CD8-positive, alpha-beta memory T cell (primary cell): ENCODE measurements at regions of chr1 and their contacts with region 1.

Region 1: GRCh38 chr1:45569962-45570581 is 13.8 kb upstream of the NASP start:
- DNase-seq: peak; percentile 47 to 80 (median 64)
- H3K4me3 ChIP-seq: no peak overlapping the region
- H3K4me3 Mint-ChIP-seq: no peak overlapping the region
- H3K27ac ChIP-seq: no peak overlapping the region
- H3K27ac Mint-ChIP-seq: peak overlapping the region in 6 of 8 donors; percentile 21 to 86 (median 48)
- H3K4me1 ChIP-seq: no peaks in the 10 kb centered on the region
- H3K4me1 Mint-ChIP-seq: no peaks in the 10 kb centered on the region
- H3K27me3 ChIP-seq: no peaks in the 10 kb centered on the region
- H3K27me3 Mint-ChIP-seq: no peaks in the 10 kb centered on the region

Region 2: DNA sequence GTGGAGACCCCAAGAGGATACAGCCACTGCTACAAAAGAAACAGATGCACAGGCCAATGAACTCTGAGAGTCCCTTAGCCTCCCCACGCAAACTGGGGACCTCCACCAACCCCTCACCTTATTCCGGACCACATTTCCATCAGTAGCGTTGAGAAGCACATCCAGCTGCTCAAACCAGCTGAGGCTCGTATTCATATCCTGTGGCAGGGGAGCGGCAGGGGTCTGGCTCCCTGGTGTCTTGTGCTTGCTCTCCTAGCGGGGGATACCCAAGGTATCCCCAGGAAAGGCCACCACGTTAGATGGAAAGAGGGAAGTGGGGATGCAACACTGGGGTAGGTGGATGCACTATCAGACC is 70.7 kb before region 1 on chr1:
- CTCF ChIA-PET with region 1: interaction called, 15 read pairs
- POLR2A ChIA-PET with region 1: no interaction called
- DNase-seq: no peak
- H3K4me3 ChIP-seq: peak overlapping the region; percentile 69
- H3K4me3 Mint-ChIP-seq: peak overlapping the region; percentile 93 to 97 (median 94)
- H3K27ac ChIP-seq: peak overlapping the region; percentile 59
- H3K27ac Mint-ChIP-seq: peak overlapping the region; percentile 71 to 97 (median 91)
- H3K4me1 ChIP-seq: peaks cover 15% of the 10 kb centered on the region
- H3K4me1 Mint-ChIP-seq: peaks cover 28 to 36% (median 35%) of the 10 kb centered on the region in 3 donors
- H3K27me3 ChIP-seq: no peaks in the 10 kb centered on the region
- H3K27me3 Mint-ChIP-seq: no peaks in the 10 kb centered on the region

Region 3: DNA sequence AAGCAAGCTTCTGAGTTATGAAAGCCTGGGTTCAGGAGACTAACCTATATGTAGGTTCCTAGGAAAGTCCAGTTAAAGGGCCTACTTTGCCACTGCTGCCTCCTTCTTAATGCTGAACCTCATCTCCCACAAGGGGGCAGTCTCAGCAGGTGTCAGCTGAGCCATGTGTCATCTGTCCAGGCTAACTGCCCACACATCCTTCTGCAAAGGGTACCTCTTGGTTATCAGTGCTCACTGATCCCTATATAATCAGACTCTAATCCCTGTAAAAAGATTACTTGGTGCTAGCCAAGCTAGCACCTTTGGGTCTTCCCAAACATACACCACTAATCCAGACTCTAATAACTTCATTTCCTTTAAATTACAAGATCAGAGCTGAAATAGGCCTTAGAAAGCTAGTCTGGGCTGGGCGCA is 57.4 kb before region 1 on chr1:
- CTCF ChIA-PET with region 1: interaction called, 101 read pairs
- POLR2A ChIA-PET with region 1: no interaction called
- DNase-seq: peak; percentile 24 to 65 (median 44)
- H3K4me3 ChIP-seq: no peak overlapping the region
- H3K4me3 Mint-ChIP-seq: no peak overlapping the region
- H3K27ac ChIP-seq: no peak overlapping the region
- H3K27ac Mint-ChIP-seq: peak overlapping the region in 3 of 8 donors; percentile 42 to 82 (median 51)
- H3K4me1 ChIP-seq: no peaks in the 10 kb centered on the region
- H3K4me1 Mint-ChIP-seq: peaks cover 0 to 12% (median 3%) of the 10 kb centered on the region in 3 donors
- H3K27me3 ChIP-seq: no peaks in the 10 kb centered on the region
- H3K27me3 Mint-ChIP-seq: no peaks in the 10 kb centered on the region

Region 4: DNA sequence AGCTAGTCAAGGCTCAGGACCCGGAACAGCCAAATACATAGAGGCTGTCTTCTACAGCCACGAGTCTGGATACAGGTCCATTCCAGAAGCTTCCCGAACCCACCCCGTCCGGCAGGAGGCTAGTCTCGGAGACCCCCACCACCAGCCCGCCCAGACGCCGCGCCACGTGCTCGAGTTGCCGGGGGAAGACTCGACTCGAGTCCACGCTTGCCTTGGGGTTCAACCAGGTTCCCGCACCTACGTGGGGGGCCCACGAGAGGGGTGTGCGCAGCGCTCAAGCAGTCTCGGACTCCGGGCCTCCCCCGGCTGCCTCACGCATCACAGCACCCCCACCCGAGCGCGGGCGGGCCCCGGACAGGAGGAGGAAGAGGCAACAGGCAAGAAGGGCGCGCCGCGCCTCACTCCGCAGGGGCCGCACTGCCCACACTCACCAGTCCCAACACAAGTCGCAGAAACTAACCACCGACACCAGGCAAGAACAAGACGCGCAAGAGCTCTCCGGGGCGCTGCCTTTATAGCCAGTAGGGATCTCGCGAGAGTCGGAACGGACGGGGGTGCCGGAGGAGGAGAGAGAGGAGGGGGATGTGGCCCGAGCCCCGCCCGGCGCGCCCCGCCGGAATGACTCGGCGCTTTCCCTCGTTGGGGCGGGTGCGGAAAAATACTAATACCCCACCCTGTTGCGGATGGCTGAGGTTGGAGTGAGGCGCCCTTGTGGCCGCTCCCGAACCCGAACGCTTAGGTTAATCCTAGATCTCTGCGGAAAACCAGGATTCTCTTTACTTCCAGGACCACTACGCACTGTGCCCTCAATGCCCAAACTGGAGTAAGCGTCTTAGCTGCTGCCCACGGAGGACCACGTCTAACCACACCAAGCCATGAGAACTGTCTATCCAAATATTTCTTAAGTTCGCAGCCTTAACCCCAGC is 48.4 kb before region 1 on chr1 and contains the start of gene PRDX1:
- CTCF ChIA-PET with region 1: interaction called, 12 read pairs
- POLR2A ChIA-PET with region 1: interaction called, 8 read pairs
- DNase-seq: peak; percentile 83 to 97 (median 92)
- H3K4me3 ChIP-seq: peak within 1 kb of the TSS; percentile 96
- H3K4me3 Mint-ChIP-seq: peak within 1 kb of the TSS; percentile 88 to 97 (median 94)
- H3K27ac ChIP-seq: peak within 1 kb of the TSS; percentile 82
- H3K27ac Mint-ChIP-seq: peak within 1 kb of the TSS; percentile 62 to 95 (median 90)
- H3K4me1 ChIP-seq: peaks cover 24% of the 10 kb centered on the region
- H3K4me1 Mint-ChIP-seq: peaks cover 24 to 37% (median 27%) of the 10 kb centered on the region in 3 donors
- H3K27me3 ChIP-seq: no peaks in the 10 kb centered on the region
- H3K27me3 Mint-ChIP-seq: peaks cover 0 to 3% of the 10 kb centered on the region in 2 donors
- total RNA-seq, gene PRDX1: 784 to 849 TPM

Region 5: GRCh38 chr1:45583264-45583665 is 13.2 kb after region 1 on chr1:
- CTCF ChIA-PET with region 1: interaction called, 48 read pairs
- POLR2A ChIA-PET with region 1: no interaction called
- DNase-seq: peak; percentile 93 to 96 (median 94)
- H3K4me3 ChIP-seq: peak overlapping the region; percentile 95
- H3K4me3 Mint-ChIP-seq: peak overlapping the region; percentile 93 to 100 (median 99)
- H3K27ac ChIP-seq: peak overlapping the region; percentile 95
- H3K27ac Mint-ChIP-seq: peak overlapping the region; percentile 96 to 99 (median 99)
- H3K4me1 ChIP-seq: peaks cover 21% of the 10 kb centered on the region
- H3K4me1 Mint-ChIP-seq: peaks cover 31 to 34% (median 34%) of the 10 kb centered on the region in 3 donors
- H3K27me3 ChIP-seq: no peaks in the 10 kb centered on the region
- H3K27me3 Mint-ChIP-seq: peaks cover 0 to 2% of the 10 kb centered on the region in 2 donors